ENCODE measurements at regions of chr17 and their contacts with region 1.

Region 1: DNA sequence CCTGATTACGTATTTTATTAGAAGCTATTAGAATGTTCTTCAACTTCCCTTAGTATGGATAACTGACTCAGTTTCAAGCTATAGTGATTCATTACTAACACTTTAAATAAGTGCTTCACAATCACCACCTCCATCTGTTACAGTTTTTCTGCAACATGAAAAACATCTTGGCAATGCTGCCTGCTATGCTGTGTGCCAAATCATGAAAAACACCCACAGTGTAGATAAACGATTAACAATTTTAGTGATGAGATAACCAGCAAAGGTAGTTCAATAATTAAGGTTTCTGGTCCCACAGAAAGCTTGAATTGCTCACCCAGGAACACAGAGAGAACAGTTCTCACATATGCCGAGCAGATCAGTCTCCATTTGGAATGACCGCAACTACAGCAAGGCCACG is 51.4 kb upstream of the SLC25A19 start:
- DNase-seq: no peak
- ATAC-seq: no peak
- H3K4me3 ChIP-seq: no peak overlapping the region
- H3K27ac ChIP-seq: no peak overlapping the region
- H3K4me1 ChIP-seq: peaks cover 8% of the 10 kb centered on the region; the same call in 1 of the 2 replicates
- H3K27me3 ChIP-seq: no peaks in the 10 kb centered on the region
- CTCF ChIP-seq: no peak

Region 2: DNA sequence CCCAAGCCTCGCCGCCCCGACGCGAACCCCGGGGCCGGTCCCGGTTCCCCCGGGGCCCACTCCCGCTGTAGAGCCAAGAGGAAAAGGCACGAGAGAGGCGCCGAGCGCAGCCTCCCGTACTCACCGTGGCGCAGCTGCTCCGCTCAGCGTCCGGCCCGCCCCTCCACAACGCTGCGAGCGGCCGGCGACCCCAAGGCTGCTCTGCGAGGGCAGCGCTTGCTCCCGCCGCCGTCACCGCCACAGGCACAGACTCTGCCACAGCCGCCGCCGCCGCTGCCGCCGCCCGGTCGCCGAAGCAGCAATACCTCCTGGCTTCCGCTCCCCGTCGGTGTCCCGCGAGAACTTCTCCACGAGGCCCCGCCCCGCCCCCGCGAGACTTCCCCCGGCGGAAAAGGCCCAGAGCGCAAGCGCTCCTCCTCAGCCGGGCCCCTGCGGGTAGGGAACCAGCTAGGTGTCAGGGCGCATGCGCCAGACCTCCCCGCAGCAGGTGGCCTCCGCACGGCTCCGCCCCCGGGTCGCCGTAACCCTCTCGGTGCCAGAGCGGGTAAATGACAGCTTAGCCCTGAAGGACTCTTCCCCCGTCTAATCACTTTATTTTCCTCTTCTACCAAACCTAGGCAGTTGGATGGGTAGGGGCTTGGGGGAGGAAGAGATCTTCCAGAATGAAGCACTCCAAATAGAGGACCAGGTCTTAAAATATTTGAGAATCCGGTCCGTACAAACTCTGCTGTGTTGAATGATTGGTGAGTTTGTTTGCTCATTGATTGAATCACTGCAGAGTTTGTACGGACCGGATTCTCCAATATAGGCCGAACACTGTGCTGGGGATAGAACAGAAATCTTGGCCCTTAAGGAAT is 65.0 kb after region 1 on chr17 and contains the start of gene GRB2:
- CTCF ChIA-PET with region 1: no interaction called
- POLR2A ChIA-PET with region 1: interaction called, 12 read pairs
- in situ Hi-C with region 1: no loop called
- intact Hi-C with region 1: no loop called
- DNase-seq: peak; percentile 63
- ATAC-seq: peak; percentile 94
- H3K4me3 ChIP-seq: peak within 1 kb of the TSS; percentile 80 to 94
- H3K27ac ChIP-seq: peak within 1 kb of the TSS; percentile 78
- H3K4me1 ChIP-seq: peaks cover 10% of the 10 kb centered on the region
- H3K27me3 ChIP-seq: no peaks in the 10 kb centered on the region
- CTCF ChIP-seq: no peak
- total RNA-seq, gene GRB2: 148 TPM

Region 3: DNA sequence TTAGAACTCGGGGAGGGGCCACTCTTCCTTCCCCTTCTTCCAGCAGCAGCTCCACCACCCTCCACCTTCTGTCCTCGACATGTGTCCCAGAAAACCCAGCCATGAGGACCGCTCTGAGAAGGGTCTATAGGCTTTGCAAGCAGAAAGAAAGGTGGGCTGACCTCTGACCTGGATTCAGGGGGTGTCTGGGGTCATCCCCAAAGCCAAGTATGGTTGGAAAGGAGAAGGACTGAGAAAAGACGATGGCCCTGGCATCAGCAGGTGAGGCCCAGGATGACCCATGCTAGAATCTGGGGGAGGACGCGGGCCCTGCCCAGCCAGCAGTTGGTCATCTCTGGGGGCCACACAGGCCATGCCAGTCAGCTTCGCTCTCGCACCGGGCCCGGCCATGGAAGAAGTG is 286.5 kb after region 1 on chr17:
- CTCF ChIA-PET with region 1: interaction called, 11 read pairs
- POLR2A ChIA-PET with region 1: no interaction called
- in situ Hi-C with region 1: no loop called
- intact Hi-C with region 1: no loop called
- DNase-seq: no peak
- ATAC-seq: no peak
- H3K4me3 ChIP-seq: no peak overlapping the region
- H3K27ac ChIP-seq: no peak overlapping the region
- H3K4me1 ChIP-seq: no peaks in the 10 kb centered on the region
- H3K27me3 ChIP-seq: no peaks in the 10 kb centered on the region
- CTCF ChIP-seq: no peak